Esophagus muscularis mucosa (tissue), 4 donors: ENCODE measurements at regions of chr1 and their contacts with region 1.

Region 1: GRCh38 chr1:7218210-7218832 is 433.1 kb downstream of the CAMTA1 start:
- DNase-seq: peak; percentile 91
- H3K4me3 ChIP-seq: no peak overlapping the region
- H3K27ac ChIP-seq: no peak overlapping the region
- H3K4me1 ChIP-seq: no peaks in the 10 kb centered on the region
- H3K27me3 ChIP-seq: peaks cover 0 to 21% (median 0%) of the 10 kb centered on the region in 4 donors
- CTCF ChIP-seq: peak; percentile 67 to 73 (median 70)
- EP300 ChIP-seq: no peak
- POLR2A ChIP-seq: no peak

Region 2: DNA sequence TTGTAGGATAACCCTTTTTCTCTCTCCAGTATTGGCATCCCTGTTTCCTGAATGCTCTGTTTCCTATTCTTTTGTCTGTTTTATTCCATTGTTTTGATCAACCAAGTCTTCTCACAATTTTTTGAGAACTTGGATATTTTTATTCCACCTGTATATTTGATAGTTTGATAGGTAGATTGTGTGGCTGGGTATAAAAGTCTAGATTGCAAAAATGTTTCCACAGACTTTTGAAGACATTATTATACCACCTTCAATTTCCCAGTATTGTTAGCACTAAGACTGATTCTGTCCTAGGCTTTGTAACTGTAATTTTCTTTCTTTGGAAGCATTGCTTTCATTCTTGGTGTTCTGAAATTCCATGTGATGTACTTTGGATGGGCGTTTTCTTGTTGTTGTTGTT is 507.1 kb before region 1 on chr1:
- intact Hi-C with region 1: loop called (anchors 10 kb)
- DNase-seq: no peak
- H3K4me3 ChIP-seq: no peak overlapping the region
- H3K27ac ChIP-seq: no peak overlapping the region
- H3K4me1 ChIP-seq: no peaks in the 10 kb centered on the region
- H3K27me3 ChIP-seq: no peaks in the 10 kb centered on the region
- CTCF ChIP-seq: no peak
- EP300 ChIP-seq: no peak
- POLR2A ChIP-seq: no peak